HEK293T (cell line): ENCODE measurements at regions of chr19 and their contacts with region 1.

Region 1: GRCh38 chr19:13060964-13061927 is 41.4 kb downstream of the LYL1 start:
- DNase-seq: peak; percentile 89

Region 2: DNA sequence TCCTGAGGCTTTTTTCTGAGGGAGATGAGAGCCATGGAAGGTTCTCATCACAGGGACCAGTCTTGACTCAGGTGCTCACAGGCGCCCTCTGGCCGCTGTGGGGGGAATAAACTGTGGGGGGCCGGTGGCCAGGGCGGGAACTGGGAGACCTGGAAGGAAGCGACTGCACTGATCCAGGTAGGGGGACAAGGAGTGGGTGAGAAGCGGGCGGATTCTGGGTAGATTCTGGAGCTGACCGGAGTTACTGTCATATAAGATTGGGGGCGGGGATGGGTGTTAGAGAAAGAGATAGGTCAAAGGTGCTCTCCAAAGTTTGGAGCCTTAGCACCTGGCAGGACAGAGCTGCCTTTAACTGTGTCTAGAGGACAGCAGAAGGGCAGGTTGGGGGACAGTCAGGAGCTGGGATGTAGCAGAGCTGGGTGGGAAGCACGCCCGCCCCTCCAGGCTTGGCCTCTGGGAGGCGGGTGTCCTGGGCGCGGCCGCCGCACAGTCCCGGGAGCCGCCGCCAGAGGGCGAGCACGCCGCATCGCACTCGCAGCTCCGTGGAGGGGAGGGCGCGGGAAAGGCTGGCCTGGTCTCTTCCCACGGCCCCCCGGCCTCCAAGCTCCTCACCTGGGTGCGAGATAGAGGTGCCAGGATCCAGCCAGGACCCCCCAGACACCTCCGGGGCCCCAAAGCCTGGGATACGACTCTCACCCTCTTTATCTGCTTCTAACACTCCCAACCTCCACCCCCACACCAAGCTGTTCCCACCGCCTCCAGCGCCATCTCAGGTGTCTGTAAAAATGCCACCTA is 96.0 kb before region 1 on chr19:
- CTCF ChIA-PET with region 1: interaction called, 16 read pairs
- POLR2A ChIA-PET with region 1: no interaction called
- DNase-seq: peak; percentile 87

Region 3: GRCh38 chr19:12983542-12984142 is 77.6 kb before region 1 on chr19:
- CTCF ChIA-PET with region 1: interaction called, 31 read pairs
- POLR2A ChIA-PET with region 1: interaction called, 4 read pairs
- DNase-seq: peak; percentile 90

Region 4: DNA sequence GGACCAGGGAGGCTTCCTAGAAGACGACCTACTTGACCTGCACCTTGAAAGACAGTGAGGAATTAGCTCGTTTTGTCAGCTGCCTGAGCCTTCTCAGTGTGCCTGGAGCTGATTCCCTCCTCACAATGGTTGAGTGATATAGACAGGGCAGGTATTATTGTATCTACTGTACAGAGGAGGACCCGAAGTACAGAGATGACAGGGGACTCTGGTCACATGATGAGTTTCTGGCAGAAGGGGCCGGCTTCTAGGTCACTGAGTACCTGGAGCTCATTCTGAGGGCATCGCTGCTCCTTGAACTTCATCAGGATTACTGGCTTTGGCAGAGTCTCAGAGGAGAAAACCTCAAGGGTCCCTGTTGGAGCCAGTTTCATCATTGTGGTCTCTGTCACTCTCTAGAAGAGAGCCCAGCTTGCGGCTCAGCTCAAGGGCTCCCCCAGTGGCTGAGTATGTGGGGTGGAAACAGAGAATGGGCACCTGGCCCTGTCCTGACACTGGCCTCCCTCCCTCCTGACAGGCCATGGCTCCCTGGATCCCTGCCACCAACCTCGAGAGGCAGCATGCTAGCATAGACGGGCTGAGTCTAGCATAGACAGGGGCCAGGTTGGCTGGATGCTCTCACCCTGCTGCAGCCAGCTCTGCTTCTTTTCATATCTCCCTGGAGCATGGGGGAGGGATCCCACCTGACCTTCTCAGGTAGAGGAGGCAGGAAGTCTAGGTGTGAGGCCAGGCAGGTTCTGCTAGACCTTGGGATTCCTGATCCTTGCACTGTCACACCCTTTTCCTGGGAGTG is 27.2 kb before region 1 on chr19:
- CTCF ChIA-PET with region 1: interaction called, 25 read pairs
- POLR2A ChIA-PET with region 1: interaction called, 3 read pairs
- DNase-seq: peak; percentile 76

Region 5: GRCh38 chr19:13044231-13044836 is 16.9 kb before region 1 on chr19:
- CTCF ChIA-PET with region 1: interaction called, 29 read pairs
- POLR2A ChIA-PET with region 1: interaction called, 3 read pairs
- DNase-seq: no peak

Region 6: DNA sequence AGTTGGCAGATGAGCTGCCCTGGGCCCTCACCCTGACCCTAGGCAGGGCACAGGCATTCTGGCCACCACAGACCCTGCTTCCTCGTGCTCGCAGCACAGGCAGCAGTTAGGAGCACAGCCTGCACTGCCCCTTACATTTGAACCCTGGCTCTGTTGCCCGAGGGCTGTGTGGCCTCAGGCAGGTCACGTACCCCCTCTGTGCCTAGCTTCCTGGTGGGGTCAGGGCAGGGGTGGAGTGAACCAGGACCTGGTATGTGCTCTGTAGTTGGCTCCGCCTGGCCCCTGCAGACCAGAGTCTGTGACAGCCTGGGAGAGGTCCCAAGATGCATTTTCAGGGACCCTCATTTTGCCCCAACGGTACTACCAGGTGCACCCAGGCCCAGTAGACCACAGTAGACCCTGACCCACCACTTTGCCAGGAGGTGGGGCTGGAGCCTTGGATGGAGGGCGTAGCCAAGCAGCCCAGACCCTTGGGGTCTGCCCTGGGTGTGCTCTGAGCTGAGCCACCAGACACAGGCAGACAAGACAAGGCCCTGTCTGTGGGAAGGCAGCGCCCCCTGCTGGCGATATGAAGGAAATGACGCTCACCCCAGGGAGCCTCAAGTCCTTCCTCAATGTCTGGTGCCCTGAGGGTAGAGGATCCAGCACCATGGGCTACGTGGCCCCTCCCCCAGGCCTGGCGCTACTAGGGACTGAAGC is 32.3 kb after region 1 on chr19:
- CTCF ChIA-PET with region 1: interaction called, 21 read pairs
- POLR2A ChIA-PET with region 1: no interaction called
- DNase-seq: peak; percentile 88